ENCODE measurements at regions of chr17 and their contacts with region 1.

Region 1: GRCh38 chr17:64020056-64020766 is at the start of gene ICAM2:
- DNase-seq: peak; percentile 96
- H3K4me3 Mint-ChIP-seq: peak within 1 kb of the TSS; percentile 97
- H3K27ac Mint-ChIP-seq: peak within 1 kb of the TSS; percentile 100
- H3K4me1 Mint-ChIP-seq: peaks cover 72% of the 10 kb centered on the region
- H3K27me3 Mint-ChIP-seq: no peaks in the 10 kb centered on the region

Region 2: DNA sequence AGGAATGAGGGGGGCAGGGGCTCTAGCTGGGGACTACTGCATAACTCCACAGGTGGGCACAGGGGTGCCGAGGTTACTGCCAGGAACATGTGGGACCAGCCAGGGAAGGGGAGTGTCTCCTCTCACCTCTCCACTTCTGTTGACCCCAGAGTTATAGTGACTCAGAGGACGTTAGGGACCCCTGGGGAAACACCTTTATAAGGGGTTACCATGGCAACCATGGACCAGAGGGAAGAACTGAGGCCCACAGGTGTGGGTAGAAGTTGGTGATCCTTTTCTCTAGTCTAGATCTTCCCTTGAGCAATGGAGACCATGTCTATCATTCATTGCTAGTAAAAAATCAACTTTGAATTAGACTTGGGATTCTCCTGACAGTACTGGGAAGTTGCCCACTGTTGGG is 143.4 kb before region 1 on chr17:
- CTCF ChIA-PET with region 1: no interaction called
- DNase-seq: no peak
- H3K4me3 Mint-ChIP-seq: no peak overlapping the region
- H3K27ac Mint-ChIP-seq: no peak overlapping the region
- H3K4me1 Mint-ChIP-seq: no peaks in the 10 kb centered on the region
- H3K27me3 Mint-ChIP-seq: peaks cover 52% of the 10 kb centered on the region

Region 3: DNA sequence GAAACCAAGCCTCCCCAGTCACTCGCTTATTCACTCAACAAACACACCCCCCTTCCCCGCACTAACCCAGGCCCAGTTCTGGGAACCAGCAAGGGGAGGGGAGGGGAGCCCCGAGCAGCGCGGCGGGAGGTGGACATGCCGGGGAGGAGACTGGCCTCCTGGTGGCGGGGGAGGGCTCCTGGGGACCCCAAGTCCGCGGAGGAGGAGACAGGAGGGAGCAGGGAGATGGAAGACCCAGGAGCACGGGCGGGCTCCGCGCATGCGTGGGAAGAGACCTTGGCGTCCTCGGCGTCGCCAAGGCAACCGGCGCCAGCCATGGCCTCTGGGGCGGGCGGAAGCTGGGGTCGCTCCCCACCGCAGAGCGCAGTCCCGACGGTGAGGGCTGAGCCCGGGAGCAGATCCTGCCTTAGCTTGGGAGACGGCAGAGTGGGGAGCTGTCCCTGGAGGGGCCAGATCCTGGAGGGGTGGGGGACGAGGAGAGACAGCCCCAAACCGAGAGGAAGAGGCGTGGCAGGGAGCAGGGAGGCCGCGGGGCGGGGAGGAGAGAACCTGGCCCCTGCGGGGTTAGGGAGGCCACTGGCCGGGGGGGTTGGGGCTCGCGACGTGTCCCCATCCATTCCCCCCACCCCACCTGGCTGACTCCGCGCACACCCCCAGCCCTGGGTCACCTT is 22.0 kb before region 1 on chr17 and contains the start of gene PRR29:
- CTCF ChIA-PET with region 1: interaction called, 23 read pairs
- DNase-seq: peak; percentile 86
- H3K4me3 Mint-ChIP-seq: peak within 1 kb of the TSS; percentile 90
- H3K27ac Mint-ChIP-seq: peak within 1 kb of the TSS; percentile 71
- H3K4me1 Mint-ChIP-seq: peaks cover 58% of the 10 kb centered on the region
- H3K27me3 Mint-ChIP-seq: peaks cover 50% of the 10 kb centered on the region

Region 4: DNA sequence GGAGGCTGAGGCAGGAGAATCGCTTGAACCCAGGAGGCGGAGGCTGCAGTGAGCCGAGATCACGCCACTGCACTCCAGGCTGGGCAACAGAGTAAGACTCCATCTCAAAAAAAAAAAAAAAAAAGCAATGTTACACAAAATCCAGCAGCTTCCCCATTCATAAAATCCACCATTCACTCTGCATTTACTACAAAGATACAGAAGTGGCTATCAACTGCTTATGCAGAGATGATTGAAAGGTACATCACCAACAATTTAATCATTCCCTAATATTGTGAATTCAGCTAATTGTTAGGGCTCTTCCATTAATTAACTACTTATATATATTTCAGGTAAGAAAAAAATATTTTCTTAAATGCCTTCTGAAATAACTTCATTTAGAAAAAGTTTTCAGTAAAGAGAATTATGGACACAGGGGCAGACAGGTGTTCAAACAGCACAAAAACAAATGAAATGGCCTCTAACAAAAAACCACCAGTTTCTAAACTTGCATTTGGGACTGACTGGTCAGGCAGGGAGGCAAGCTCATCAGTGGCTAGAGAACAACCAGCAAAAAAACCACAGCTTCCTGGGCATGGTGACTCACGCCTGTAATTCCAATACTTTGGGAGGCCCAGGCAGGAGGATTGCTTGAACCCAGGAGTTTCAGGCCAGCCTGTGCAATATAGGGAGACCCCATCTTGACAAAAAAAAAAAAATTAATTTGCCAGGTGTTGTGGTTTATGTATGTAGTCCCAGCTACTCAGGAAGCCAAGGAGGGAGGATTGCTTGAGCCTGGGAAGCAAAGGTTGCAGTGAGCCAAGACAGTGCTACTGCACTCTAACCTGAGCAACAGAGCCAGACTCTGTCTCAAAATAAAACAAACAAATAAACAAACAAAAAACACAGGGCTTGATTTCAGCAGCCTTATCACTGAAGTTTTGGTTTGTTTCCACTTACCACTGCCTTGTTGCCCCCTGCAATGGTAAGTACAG is 83.5 kb after region 1 on chr17:
- CTCF ChIA-PET with region 1: no interaction called
- DNase-seq: no peak
- H3K4me3 Mint-ChIP-seq: no peak overlapping the region
- H3K27ac Mint-ChIP-seq: no peak overlapping the region
- H3K4me1 Mint-ChIP-seq: peaks cover 51% of the 10 kb centered on the region
- H3K27me3 Mint-ChIP-seq: no peaks in the 10 kb centered on the region

Measured in activated naive CD4-positive, alpha-beta T cell treated with anti-CD3 and anti-CD28 coated beads, Interleukin-2, amount 10 ng/mL, durations not matched to agents 7 days and 5 days (primary cell).